ENCODE measurements at regions of chr10 and their contacts with region 1.

Region 1: DNA sequence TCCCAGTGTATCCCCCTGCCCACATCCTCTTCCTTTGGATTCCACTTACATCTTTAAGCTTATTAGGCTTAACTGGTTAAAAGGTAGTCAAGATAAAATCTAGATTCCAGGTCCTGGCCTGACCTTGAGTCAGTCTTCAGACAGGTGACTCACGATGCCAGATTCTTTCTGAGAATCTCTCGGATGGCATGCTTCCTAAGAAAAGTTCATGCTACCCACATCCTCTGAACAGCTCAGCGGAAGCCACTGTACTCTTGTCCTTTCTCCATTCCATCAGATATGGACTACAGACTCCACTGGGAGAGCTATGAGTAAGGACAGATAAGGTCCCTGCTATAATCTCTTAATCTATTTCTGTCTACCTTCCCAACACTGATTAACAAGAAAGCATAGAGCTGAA is 43.4 kb downstream of the DNMBP start:
- DNase-seq: peak; percentile 44 to 64
- H3K4me3 ChIP-seq: no peak overlapping the region
- H3K4me3 Mint-ChIP-seq: peak overlapping the region; percentile 34
- H3K27ac Mint-ChIP-seq: no peak overlapping the region
- H3K4me1 ChIP-seq: peaks cover 16% of the 10 kb centered on the region
- H3K4me1 Mint-ChIP-seq: peaks cover 14% of the 10 kb centered on the region
- H3K27me3 ChIP-seq: no peaks in the 10 kb centered on the region
- H3K27me3 Mint-ChIP-seq: no peaks in the 10 kb centered on the region
- CTCF ChIP-seq: no peak

Region 2: DNA sequence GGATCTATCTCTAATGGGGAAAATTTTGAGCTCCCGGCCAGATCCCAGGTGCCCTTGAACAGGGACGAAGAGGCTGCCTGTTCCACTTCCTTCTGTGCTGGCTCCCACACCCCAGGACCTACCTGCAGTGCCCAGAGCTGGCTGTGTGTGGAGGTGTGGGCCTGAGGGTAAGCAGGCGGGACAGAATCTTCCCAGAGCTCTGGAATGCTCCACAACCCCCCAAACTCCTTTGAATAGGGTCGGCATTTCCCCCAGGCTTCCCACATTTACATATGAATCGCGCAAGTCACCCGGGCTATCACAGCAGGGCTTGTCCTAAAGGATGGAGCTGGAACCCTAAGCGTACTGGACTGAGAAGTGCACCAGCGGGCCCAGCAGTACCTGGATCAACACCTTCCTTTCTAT is 52.5 kb before region 1 on chr10:
- CTCF ChIA-PET with region 1: interaction called, 3 read pairs
- POLR2A ChIA-PET with region 1: no interaction called
- intact Hi-C with region 1: loop called (anchors 5 kb)
- DNase-seq: peak; percentile 33 to 53
- H3K4me3 ChIP-seq: no peak overlapping the region
- H3K4me3 Mint-ChIP-seq: no peak overlapping the region
- H3K27ac Mint-ChIP-seq: no peak overlapping the region
- H3K4me1 ChIP-seq: 0 out of 2 replicates have a peak, but pooled peaks cover 9% of the 10 kb centered on the region
- H3K4me1 Mint-ChIP-seq: peaks cover 20% of the 10 kb centered on the region
- H3K27me3 ChIP-seq: no peaks in the 10 kb centered on the region
- H3K27me3 Mint-ChIP-seq: no peaks in the 10 kb centered on the region
- CTCF ChIP-seq: peak in 1 of 2 experiments; percentile 51

Region 3: DNA sequence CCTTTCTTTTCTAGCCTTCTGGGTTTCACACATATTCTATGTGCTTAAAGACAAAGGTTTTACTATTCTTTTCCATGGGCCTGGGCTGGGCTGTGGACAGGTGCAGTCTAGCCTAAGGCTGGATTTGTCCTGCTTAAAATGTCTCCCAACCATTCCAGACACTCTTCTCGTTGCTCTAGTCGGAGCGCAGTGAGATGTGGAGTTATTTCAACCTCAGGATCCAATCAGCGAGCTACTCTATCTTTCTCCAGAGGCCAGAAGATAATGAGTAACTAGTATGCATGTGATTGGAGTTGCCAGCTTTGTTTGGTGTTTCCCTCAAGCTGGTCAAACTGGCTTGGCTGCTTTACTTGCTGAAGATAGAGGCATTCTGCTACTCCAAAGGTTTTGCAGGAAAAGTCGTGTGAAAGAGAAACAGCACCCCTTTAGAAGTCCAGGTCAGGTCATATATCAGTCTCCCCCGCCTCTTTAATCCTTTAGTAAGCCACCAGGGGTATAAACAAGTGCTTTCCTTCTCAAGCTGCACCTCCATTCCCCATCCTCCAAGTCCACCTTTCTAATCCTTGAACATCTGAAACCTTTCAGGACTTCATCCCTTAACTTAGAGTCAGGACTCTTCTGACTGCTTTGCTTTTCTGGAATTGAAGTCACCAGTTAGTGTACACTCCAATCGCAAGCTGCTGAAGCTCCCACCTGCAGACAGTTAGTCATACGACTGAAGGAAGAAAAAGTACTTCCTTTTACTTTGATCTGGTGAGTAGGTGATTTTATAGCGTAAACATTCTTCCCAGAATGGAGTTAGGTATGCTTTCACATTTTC is 35.4 kb before region 1 on chr10:
- CTCF ChIA-PET with region 1: interaction called, 6 read pairs
- POLR2A ChIA-PET with region 1: interaction called, 11 read pairs
- intact Hi-C with region 1: loop called (anchors 2 kb)
- DNase-seq: peak; percentile 94 to 95
- H3K4me3 ChIP-seq: peak overlapping the region; percentile 56
- H3K4me3 Mint-ChIP-seq: peak overlapping the region; percentile 89
- H3K27ac Mint-ChIP-seq: peak overlapping the region; percentile 89
- H3K4me1 ChIP-seq: peaks cover 32% of the 10 kb centered on the region
- H3K4me1 Mint-ChIP-seq: peaks cover 27% of the 10 kb centered on the region
- H3K27me3 ChIP-seq: no peaks in the 10 kb centered on the region
- H3K27me3 Mint-ChIP-seq: no peaks in the 10 kb centered on the region
- CTCF ChIP-seq: peak in 1 of 2 experiments; percentile 9

Region 4: GRCh38 chr10:99993701-99994689 is 27.7 kb after region 1 on chr10:
- CTCF ChIA-PET with region 1: no interaction called
- POLR2A ChIA-PET with region 1: no interaction called
- intact Hi-C with region 1: no loop called
- DNase-seq: no peak
- H3K4me3 ChIP-seq: no peak overlapping the region
- H3K4me3 Mint-ChIP-seq: no peak overlapping the region
- H3K27ac Mint-ChIP-seq: no peak overlapping the region
- H3K4me1 ChIP-seq: 0 out of 2 replicates have a peak, but pooled peaks cover 6% of the 10 kb centered on the region
- H3K4me1 Mint-ChIP-seq: peaks cover 8% of the 10 kb centered on the region
- H3K27me3 ChIP-seq: no peaks in the 10 kb centered on the region
- H3K27me3 Mint-ChIP-seq: no peaks in the 10 kb centered on the region
- CTCF ChIP-seq: no peak

Measured in Caco-2 (cell line).